CD8-positive, alpha-beta T cell (primary cell): ENCODE measurements at regions of chr11 and their contacts with region 1.

Region 1: DNA sequence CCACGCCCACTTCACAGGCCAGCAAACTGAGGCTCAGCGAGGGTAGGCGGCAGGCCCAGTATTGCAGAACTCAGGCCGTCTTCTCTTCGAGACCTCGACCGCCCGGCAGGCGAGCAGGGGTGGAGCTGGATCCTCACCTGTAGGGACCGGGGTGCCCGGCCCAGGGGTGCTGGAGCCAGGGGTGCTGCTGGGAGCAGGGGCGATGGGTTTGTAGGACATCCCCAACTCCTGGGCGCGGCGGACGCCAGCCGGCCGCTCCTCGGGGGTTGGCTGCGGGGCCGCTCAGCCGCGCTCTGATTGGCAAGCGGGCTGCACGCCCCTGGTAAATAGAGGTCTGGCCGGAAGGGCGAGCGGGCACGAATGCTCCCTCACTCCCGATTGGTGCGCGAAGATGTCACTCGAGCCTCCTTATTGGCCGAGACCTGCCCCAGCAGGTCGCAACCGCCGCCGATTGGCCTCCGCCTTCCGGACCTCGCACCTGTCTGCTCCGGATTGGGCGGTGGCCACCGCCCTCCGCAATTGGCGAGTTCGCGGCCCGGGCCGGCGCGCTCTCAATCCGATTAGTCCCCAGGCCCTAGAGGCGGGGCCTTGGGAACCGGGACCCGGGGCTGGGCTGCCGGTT is at the start of gene CDK2AP2:
- DNase-seq: peak; percentile 93 to 99 (median 97)
- ATAC-seq: peak; percentile 69
- H3K4me3 ChIP-seq: peak within 1 kb of the TSS; percentile 66 to 97
- H3K4me3 Mint-ChIP-seq: peak within 1 kb of the TSS; percentile 90
- H3K27ac ChIP-seq: peak within 1 kb of the TSS; percentile 97
- H3K27ac Mint-ChIP-seq: peak within 1 kb of the TSS; percentile 97
- H3K4me1 ChIP-seq: peaks cover 42% of the 10 kb centered on the region
- H3K4me1 Mint-ChIP-seq: peaks cover 38% of the 10 kb centered on the region
- H3K27me3 ChIP-seq: no peaks in the 10 kb centered on the region
- H3K27me3 Mint-ChIP-seq: peaks cover 6% of the 10 kb centered on the region
- CTCF ChIP-seq: no peak
- total RNA-seq, gene CDK2AP2: 19.4 to 24.4 TPM

Region 2: GRCh38 chr11:66842896-66843775 is 664.8 kb before region 1 on chr11 and contains the start of gene RCE1:
- CTCF ChIA-PET with region 1: no interaction called
- POLR2A ChIA-PET with region 1: no interaction called
- intact Hi-C with region 1: loop called in 1 of 2 experiments (anchors 5 kb)
- DNase-seq: peak; percentile 85 to 96 (median 89)
- ATAC-seq: peak; percentile 88
- H3K4me3 ChIP-seq: peak within 1 kb of the TSS; percentile 68 to 91
- H3K4me3 Mint-ChIP-seq: peak within 1 kb of the TSS; percentile 86
- H3K27ac ChIP-seq: peak within 1 kb of the TSS; percentile 99 to 100
- H3K27ac Mint-ChIP-seq: peak within 1 kb of the TSS; percentile 93
- H3K4me1 ChIP-seq: peaks cover 47% of the 10 kb centered on the region
- H3K4me1 Mint-ChIP-seq: peaks cover 51% of the 10 kb centered on the region
- H3K27me3 ChIP-seq: no peaks in the 10 kb centered on the region
- H3K27me3 Mint-ChIP-seq: no peaks in the 10 kb centered on the region
- CTCF ChIP-seq: no peak
- total RNA-seq, gene RCE1: 68.9 to 72.2 TPM

Region 3: GRCh38 chr11:67056640-67057308 is 451.2 kb before region 1 on chr11 and contains the start of gene RHOD:
- CTCF ChIA-PET with region 1: no interaction called
- POLR2A ChIA-PET with region 1: no interaction called
- intact Hi-C with region 1: no loop called
- DNase-seq: peak in 7 of 9 experiments; percentile 14 to 62 (median 36)
- ATAC-seq: peak; percentile 57
- H3K4me3 ChIP-seq: peak within 1 kb of the TSS; percentile 22 to 46
- H3K4me3 Mint-ChIP-seq: peak within 1 kb of the TSS; percentile 67
- H3K27ac ChIP-seq: no peak within 1 kb of the TSS
- H3K27ac Mint-ChIP-seq: no peak within 1 kb of the TSS
- H3K4me1 ChIP-seq: peaks cover 10% of the 10 kb centered on the region
- H3K4me1 Mint-ChIP-seq: peaks cover 13% of the 10 kb centered on the region
- H3K27me3 ChIP-seq: peaks cover 0 to 4% of the 10 kb centered on the region in 2 experiments
- H3K27me3 Mint-ChIP-seq: peaks cover 12% of the 10 kb centered on the region
- CTCF ChIP-seq: no peak
- total RNA-seq, gene RHOD: 0.62 TPM in 1 of 2 experiments, not detected in the other

Region 4: GRCh38 chr11:67277231-67277961 is 230.6 kb before region 1 on chr11:
- CTCF ChIA-PET with region 1: no interaction called
- POLR2A ChIA-PET with region 1: interaction called, 3 read pairs
- intact Hi-C with region 1: loop called in 1 of 2 experiments (anchors 5 kb)
- DNase-seq: peak; percentile 82 to 98 (median 93)
- ATAC-seq: peak; percentile 92
- H3K4me3 ChIP-seq: peak overlapping the region; percentile 46 to 79
- H3K4me3 Mint-ChIP-seq: peak overlapping the region; percentile 79
- H3K27ac ChIP-seq: peak overlapping the region; percentile 74 to 76
- H3K27ac Mint-ChIP-seq: peak overlapping the region; percentile 95
- H3K4me1 ChIP-seq: peaks cover 100% of the 10 kb centered on the region
- H3K4me1 Mint-ChIP-seq: peaks cover 68% of the 10 kb centered on the region
- H3K27me3 ChIP-seq: no peaks in the 10 kb centered on the region
- H3K27me3 Mint-ChIP-seq: no peaks in the 10 kb centered on the region
- CTCF ChIP-seq: no peak

Region 5: GRCh38 chr11:67420646-67421420 is 87.1 kb before region 1 on chr11:
- CTCF ChIA-PET with region 1: interaction called, 4 read pairs
- POLR2A ChIA-PET with region 1: interaction called, 7 read pairs
- intact Hi-C with region 1: loop called in 1 of 2 experiments (anchors 1 kb)
- DNase-seq: peak; percentile 97 to 100 (median 99)
- ATAC-seq: peak; percentile 85
- H3K4me3 ChIP-seq: peak overlapping the region; percentile 49 to 50
- H3K4me3 Mint-ChIP-seq: peak overlapping the region; percentile 86
- H3K27ac ChIP-seq: peak overlapping the region; percentile 55 to 68
- H3K27ac Mint-ChIP-seq: peak overlapping the region; percentile 91
- H3K4me1 ChIP-seq: peaks cover 50% of the 10 kb centered on the region
- H3K4me1 Mint-ChIP-seq: peaks cover 47% of the 10 kb centered on the region
- H3K27me3 ChIP-seq: no peaks in the 10 kb centered on the region
- H3K27me3 Mint-ChIP-seq: no peaks in the 10 kb centered on the region
- CTCF ChIP-seq: no peak

Region 6: DNA sequence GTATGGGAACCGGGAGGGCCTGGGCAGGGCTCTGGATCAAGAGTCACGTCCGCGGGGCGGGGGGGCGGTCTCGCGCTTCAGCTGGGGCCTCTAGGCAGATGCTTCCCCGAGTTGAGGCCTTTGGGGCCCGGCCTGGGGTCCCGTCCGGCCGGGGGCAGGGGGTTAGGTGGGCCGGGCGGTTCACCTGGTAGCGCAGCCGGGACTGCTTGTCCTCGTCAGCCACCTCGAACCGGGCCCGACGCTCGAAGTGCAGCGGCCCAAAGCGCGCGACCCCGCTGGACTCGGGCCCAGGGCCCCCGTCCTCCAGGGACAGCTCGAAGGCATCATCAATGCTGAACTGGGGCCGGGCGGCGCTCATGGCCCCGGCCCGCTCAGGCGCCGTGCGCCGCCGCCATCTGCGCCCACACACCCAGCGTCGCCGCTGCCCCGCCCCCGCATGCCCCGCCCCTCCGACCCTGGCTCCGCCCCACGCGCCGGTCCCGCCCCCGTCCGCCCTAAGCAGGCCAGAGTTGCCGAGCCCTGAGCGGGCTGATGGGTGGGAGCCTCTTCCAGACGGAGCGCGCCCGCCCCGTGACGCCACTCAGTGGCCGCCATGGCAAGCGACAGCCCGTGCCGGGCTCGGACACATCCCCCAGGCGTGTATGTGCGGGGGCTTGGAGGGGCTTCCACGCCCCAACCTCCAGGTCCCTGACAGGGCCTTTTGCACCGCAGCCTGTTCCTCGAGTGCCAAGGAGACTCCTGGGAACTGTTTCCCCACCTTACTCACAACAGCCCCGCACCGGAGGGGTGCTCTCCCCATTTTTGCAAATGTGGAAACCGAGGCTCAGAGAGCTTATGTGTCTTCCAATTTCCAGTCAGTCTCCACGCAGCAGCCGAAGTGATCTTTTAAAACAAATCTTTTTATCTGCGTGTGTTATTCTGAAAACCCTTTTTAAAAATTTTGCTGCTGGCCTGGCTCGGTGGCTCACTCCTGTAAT is 38.9 kb before region 1 on chr11 and contains the start of gene TMEM134:
- CTCF ChIA-PET with region 1: interaction called, 9 read pairs
- POLR2A ChIA-PET with region 1: interaction called, 6 read pairs
- intact Hi-C with region 1: loop called (anchors 1 kb)
- DNase-seq: peak; percentile 86 to 97 (median 91)
- ATAC-seq: peak; percentile 81
- H3K4me3 ChIP-seq: peak within 1 kb of the TSS; percentile 80 to 89
- H3K4me3 Mint-ChIP-seq: peak within 1 kb of the TSS; percentile 89
- H3K27ac ChIP-seq: peak within 1 kb of the TSS; percentile 78 to 82
- H3K27ac Mint-ChIP-seq: peak within 1 kb of the TSS; percentile 93
- H3K4me1 ChIP-seq: peaks cover 39% of the 10 kb centered on the region
- H3K4me1 Mint-ChIP-seq: peaks cover 37% of the 10 kb centered on the region
- H3K27me3 ChIP-seq: no peaks in the 10 kb centered on the region
- H3K27me3 Mint-ChIP-seq: no peaks in the 10 kb centered on the region
- CTCF ChIP-seq: peak; percentile 43
- total RNA-seq, gene TMEM134: 41.2 to 48.5 TPM

Region 7: DNA sequence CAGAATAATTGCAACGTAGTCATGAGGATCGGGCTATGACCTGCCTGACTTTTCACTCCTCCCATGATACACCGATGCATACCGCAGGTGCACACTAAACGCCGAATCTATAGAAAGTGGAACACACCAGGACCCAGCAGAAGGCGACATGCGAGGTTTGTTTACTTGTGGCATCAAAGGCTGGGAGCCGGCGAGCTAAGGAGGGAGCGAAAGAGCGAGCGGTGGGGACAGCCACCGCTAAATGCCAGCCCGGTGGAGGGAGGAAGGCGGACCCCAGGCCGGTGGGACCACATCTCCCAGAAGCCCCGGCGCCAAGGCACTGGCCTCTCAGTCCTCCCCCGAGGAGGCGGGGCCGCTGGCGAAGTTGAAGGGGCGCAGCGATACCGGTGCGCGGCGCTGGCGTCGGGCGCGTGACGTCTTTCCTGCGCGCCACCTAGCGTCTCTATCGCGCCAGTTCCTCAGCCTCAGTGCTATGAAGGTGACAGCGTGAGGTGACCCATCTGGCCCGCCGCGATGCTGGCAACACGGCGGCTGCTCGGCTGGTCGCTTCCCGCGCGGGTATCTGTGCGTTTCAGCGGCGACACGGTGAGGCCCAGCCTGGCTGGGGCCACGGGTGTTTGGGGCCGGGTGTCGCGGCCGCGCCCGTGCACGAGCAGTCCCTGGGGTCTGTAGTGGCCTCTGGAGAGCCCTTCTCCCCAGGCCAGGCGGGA is 98.7 kb after region 1 on chr11 and contains the start of gene NDUFV1:
- CTCF ChIA-PET with region 1: no interaction called
- POLR2A ChIA-PET with region 1: no interaction called
- intact Hi-C with region 1: loop called (anchors 1 kb)
- DNase-seq: peak; percentile 92 to 98 (median 96)
- ATAC-seq: peak; percentile 99
- H3K4me3 ChIP-seq: peak within 1 kb of the TSS; percentile 69
- H3K4me3 Mint-ChIP-seq: peak within 1 kb of the TSS; percentile 91
- H3K27ac ChIP-seq: peak within 1 kb of the TSS; percentile 69 to 71
- H3K27ac Mint-ChIP-seq: peak within 1 kb of the TSS; percentile 89
- H3K4me1 ChIP-seq: peaks cover 21% of the 10 kb centered on the region
- H3K4me1 Mint-ChIP-seq: peaks cover 20% of the 10 kb centered on the region
- H3K27me3 ChIP-seq: no peaks in the 10 kb centered on the region
- H3K27me3 Mint-ChIP-seq: peaks cover 8% of the 10 kb centered on the region
- CTCF ChIP-seq: peak; percentile 59
- total RNA-seq, gene NDUFV1: 220 to 237 TPM